ENCODE measurements at regions of chr10 and their contacts with region 1.

Region 1: DNA sequence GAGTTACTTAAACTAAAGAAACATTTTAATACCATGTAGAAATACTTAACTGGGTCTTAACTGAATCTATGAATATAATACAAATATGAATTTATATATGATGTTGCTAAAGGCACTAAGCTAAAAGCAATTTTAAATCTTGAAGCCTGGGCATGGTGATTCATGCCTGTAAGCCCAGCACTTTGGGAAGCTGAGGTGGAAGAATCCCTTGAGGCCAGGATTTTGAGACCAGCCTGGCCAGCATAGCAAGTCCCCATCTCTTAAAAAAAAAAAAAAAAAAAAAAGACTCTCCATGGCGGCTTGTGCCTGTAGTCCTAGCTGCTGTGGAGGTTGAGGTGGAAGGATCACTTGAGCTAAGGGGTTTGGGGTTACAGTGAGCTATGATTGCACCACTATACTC is 95.3 kb downstream of the CCSER2 start:
- DNase-seq: no peak
- H3K4me3 ChIP-seq: no peak overlapping the region
- H3K27ac ChIP-seq: no peak overlapping the region
- H3K4me1 ChIP-seq: peaks cover 17% of the 10 kb centered on the region
- H3K27me3 ChIP-seq: no peaks in the 10 kb centered on the region
- CTCF ChIP-seq: no peak

Region 2: DNA sequence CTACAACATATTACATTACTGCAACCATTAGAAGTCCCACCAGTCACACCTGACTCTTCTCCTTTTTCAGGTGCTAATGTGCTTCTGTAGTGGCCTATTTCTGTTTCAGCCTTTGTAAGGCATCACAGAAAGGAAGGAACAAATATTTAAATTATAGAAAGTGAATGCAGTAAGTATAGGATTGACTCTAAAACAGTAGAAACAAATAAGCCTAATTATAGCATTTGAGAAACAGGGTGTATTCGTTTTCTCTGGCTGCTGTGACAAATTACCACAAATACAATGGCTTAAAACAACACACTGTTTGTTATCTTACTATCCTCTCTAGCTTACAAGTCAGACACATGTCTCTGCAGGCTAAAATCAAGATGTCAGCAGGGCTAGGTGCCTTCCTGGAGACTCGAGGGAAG is 26.0 kb before region 1 on chr10:
- CTCF ChIA-PET with region 1: no interaction called
- POLR2A ChIA-PET with region 1: interaction called, 18 read pairs
- intact Hi-C with region 1: no loop called
- DNase-seq: no peak
- H3K4me3 ChIP-seq: no peak overlapping the region
- H3K27ac ChIP-seq: no peak overlapping the region
- H3K4me1 ChIP-seq: no peaks in the 10 kb centered on the region
- H3K27me3 ChIP-seq: no peaks in the 10 kb centered on the region
- CTCF ChIP-seq: no peak

Region 3: GRCh38 chr10:85212526-85212925 is 788.8 kb after region 1 on chr10:
- CTCF ChIA-PET with region 1: no interaction called
- POLR2A ChIA-PET with region 1: no interaction called
- intact Hi-C with region 1: no loop called
- DNase-seq: no peak
- H3K4me3 ChIP-seq: no peak overlapping the region
- H3K27ac ChIP-seq: no peak overlapping the region
- H3K4me1 ChIP-seq: no peaks in the 10 kb centered on the region
- H3K27me3 ChIP-seq: no peaks in the 10 kb centered on the region
- CTCF ChIP-seq: no peak